Left colon (tissue), 2 donors: ENCODE measurements at regions of chr17 and their contacts with region 1.

Region 1: DNA sequence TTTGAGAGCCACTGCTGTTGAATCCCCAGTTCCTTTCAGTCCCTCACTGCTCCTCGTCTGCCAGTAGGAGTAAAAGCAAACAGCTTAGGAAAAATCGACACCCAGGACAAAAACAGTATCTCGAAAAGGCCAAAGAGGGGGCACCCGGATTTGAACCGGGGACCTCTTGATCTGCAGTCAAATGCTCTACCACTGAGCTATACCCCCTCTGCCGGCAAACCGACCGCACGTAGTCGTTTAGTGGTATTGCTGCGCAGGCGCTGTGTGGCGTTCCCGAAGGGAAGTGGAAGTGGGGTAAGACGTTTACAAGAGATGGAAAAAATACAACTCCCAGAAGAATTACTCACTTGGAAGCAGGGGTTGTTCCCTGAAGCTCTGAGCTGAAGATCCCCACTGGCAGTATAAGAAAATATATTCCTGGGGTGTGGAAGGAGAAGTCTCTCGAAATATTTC is 2.2 kb upstream of the PLXDC1 start:
- DNase-seq: peak; percentile 86 to 91
- ATAC-seq: peak; percentile 77

Region 2: GRCh38 chr17:38982858-38983746 is 170.5 kb before region 1 on chr17:
- intact Hi-C with region 1: loop called (anchors 5 to 10 kb)
- DNase-seq: peak in 1 of 2 donors; percentile 35
- ATAC-seq: peak; percentile 67

Region 3: GRCh38 chr17:39057701-39058206 is 95.9 kb before region 1 on chr17:
- intact Hi-C with region 1: loop called in 1 of 2 experiments (anchors 5 kb)
- DNase-seq: no peak
- ATAC-seq: no peak